ENCODE measurements at regions of chr19 and their contacts with region 1.

Region 1: GRCh38 chr19:38049105-38049649 is 142.2 kb downstream of the SIPA1L3 start:
- DNase-seq: peak in 9 of 10 donors; percentile 12 to 82 (median 57)
- ATAC-seq: peak; percentile 88 to 89
- H3K4me3 Mint-ChIP-seq: peak overlapping the region; percentile 78 to 88 (median 85)
- H3K27ac Mint-ChIP-seq: peak overlapping the region; percentile 91 to 99 (median 98)
- H3K4me1 Mint-ChIP-seq: peaks cover 22 to 55% (median 50%) of the 10 kb centered on the region in 4 donors
- H3K27me3 Mint-ChIP-seq: no peaks in the 10 kb centered on the region

Region 2: GRCh38 chr19:37906869-37907734 is 142.1 kb before region 1 on chr19 and contains the start of gene SIPA1L3:
- POLR2A ChIA-PET with region 1: interaction called, 30 read pairs
- DNase-seq: peak; percentile 84 to 94 (median 88)
- ATAC-seq: peak; percentile 96 to 98
- H3K4me3 Mint-ChIP-seq: peak within 1 kb of the TSS; percentile 91 to 96 (median 95)
- H3K27ac Mint-ChIP-seq: peak within 1 kb of the TSS; percentile 51 to 97 (median 94)
- H3K4me1 Mint-ChIP-seq: peaks cover 15 to 51% (median 38%) of the 10 kb centered on the region in 4 donors
- H3K27me3 Mint-ChIP-seq: no peaks in the 10 kb centered on the region
- polyA plus RNA-seq, gene SIPA1L3: 0.66 to 1.6 (median 1.6) TPM

Region 3: DNA sequence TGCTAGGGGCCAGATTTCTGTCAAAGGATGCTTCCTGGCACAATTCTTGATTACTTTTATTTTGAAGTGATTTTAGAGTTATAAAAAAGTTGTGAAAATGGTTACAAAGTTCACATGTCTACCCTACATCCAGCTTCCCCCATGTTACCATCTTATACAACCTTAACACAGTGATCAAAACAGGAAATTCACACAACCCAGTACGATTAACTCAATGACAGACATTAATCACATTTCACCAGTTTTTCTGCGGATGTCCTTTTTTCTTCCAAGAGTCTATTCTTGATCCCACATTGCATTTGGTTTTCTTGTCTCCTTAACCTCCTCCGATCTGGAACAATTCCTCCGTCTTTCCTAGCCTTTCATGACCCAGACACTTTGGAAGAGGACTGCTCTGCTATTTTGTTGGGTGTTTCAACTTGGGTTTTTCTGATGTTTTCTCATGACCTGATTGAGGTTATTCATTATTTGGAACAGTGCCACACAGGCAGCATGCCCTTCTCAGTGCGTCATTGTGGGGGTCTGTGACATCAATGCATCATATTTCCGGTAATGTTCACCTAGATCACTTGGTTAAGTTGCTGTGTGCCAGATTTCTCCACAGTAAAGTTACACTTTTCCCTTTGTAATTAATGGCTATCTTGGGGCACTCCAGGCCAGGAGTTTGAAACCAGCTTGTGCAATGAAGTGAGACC is 18.0 kb before region 1 on chr19:
- POLR2A ChIA-PET with region 1: no interaction called
- DNase-seq: no peak
- ATAC-seq: no peak
- H3K4me3 Mint-ChIP-seq: no peak overlapping the region
- H3K27ac Mint-ChIP-seq: no peak overlapping the region
- H3K4me1 Mint-ChIP-seq: peaks cover 0 to 52% (median 6%) of the 10 kb centered on the region in 4 donors
- H3K27me3 Mint-ChIP-seq: no peaks in the 10 kb centered on the region